ENCODE measurements at regions of chr9 and their contacts with region 1.

Region 1: DNA sequence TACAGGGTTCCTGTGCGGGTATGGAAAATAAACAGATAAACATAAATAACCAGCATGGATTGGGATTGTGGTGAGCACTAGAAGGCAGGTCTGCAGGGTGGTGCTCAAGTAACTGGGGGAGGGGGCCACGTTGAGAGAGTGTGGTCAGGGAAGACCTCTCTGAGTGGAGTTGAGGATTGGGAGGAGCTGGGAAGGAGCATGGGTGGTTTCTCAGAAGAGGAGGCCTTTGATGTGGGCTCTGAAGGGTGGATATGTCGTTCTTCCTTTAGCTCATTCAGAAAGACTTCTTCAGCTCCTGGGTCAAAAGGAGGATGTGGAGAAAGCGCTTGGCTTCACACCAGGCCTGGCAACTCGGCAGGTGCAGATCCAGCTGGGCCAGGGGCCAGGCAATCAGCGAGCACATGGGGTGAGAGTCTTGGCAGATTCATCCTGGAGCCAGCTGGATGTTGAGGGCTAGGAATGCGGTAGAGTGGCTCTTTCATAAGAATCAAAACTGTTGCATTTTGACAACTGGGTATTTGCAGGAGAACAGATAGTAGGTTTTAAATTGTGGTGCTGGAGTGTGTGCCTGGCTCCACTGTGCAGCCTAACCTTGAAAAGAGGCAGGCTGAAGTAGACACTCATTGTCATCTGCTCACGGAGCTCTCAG is 71.7 kb downstream of the PCSK5 start:
- DNase-seq: peak; percentile 64 to 88
- H3K4me3 ChIP-seq: no peak overlapping the region
- H3K27ac ChIP-seq: peak overlapping the region; percentile 81
- H3K4me1 ChIP-seq: peaks cover 42% of the 10 kb centered on the region
- H3K27me3 ChIP-seq: no peaks in the 10 kb centered on the region
- CTCF ChIP-seq: no peak

Region 2: GRCh38 chr9:75890472-75891276 is 71.5 kb before region 1 on chr9 and contains the start of gene PCSK5:
- CTCF ChIA-PET with region 1: interaction called, 3 read pairs
- POLR2A ChIA-PET with region 1: no interaction called
- intact Hi-C with region 1: loop called (anchors 1 kb)
- DNase-seq: peak; percentile 88 to 89
- H3K4me3 ChIP-seq: peak within 1 kb of the TSS; percentile 76
- H3K27ac ChIP-seq: peak within 1 kb of the TSS; percentile 92
- H3K4me1 ChIP-seq: peaks cover 32% of the 10 kb centered on the region
- H3K27me3 ChIP-seq: no peaks in the 10 kb centered on the region
- CTCF ChIP-seq: peak; percentile 35; the same call in 1 of the 2 replicates
- total RNA-seq, gene PCSK5: 8.2 and 9.8 TPM in 2 replicates

Region 3: GRCh38 chr9:75909776-75910175 is 52.4 kb before region 1 on chr9:
- CTCF ChIA-PET with region 1: no interaction called
- POLR2A ChIA-PET with region 1: no interaction called
- intact Hi-C with region 1: no loop called
- DNase-seq: no peak
- H3K4me3 ChIP-seq: no peak overlapping the region
- H3K27ac ChIP-seq: no peak overlapping the region
- H3K4me1 ChIP-seq: peaks cover 9% of the 10 kb centered on the region
- H3K27me3 ChIP-seq: no peaks in the 10 kb centered on the region
- CTCF ChIP-seq: no peak

Region 4: GRCh38 chr9:76067696-76068095 is 105.6 kb after region 1 on chr9:
- CTCF ChIA-PET with region 1: no interaction called
- POLR2A ChIA-PET with region 1: no interaction called
- intact Hi-C with region 1: no loop called
- DNase-seq: no peak
- H3K4me3 ChIP-seq: no peak overlapping the region
- H3K27ac ChIP-seq: no peak overlapping the region
- H3K4me1 ChIP-seq: no peaks in the 10 kb centered on the region
- H3K27me3 ChIP-seq: no peaks in the 10 kb centered on the region
- CTCF ChIP-seq: no peak

Region 5: GRCh38 chr9:76181020-76181641 is 219.0 kb after region 1 on chr9:
- CTCF ChIA-PET with region 1: no interaction called
- POLR2A ChIA-PET with region 1: interaction called, 3 read pairs
- intact Hi-C with region 1: loop called (anchors 1 kb)
- DNase-seq: peak; percentile 62 to 99
- H3K4me3 ChIP-seq: peak overlapping the region; percentile 37; the same call in 1 of the 2 replicates
- H3K27ac ChIP-seq: peak overlapping the region; percentile 76
- H3K4me1 ChIP-seq: peaks cover 22% of the 10 kb centered on the region
- H3K27me3 ChIP-seq: no peaks in the 10 kb centered on the region
- CTCF ChIP-seq: no peak

Region 6: DNA sequence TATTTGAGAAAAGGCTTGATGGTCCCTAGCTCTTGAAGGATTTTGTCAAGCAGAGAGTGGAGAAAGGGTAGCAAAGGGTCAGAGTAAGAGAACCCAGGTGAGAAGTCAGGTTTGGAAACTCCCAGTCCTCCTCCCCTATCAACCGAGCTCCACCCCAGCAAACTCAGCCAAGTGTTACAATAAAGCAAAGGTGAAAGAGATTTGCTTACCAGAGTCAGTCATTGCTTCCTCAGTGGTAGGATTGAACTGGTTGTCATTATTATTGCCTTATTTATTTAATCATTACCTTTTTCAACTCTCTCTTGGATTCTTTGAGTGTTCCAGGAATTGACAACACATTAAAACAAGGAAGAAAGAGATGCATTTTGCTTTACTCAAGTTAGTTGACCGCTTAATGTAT is 351.6 kb after region 1 on chr9:
- CTCF ChIA-PET with region 1: interaction called, 4 read pairs
- POLR2A ChIA-PET with region 1: no interaction called
- intact Hi-C with region 1: loop called (anchors 10 kb)
- DNase-seq: no peak
- H3K4me3 ChIP-seq: no peak overlapping the region
- H3K27ac ChIP-seq: no peak overlapping the region
- H3K4me1 ChIP-seq: peaks cover 47% of the 10 kb centered on the region
- H3K27me3 ChIP-seq: no peaks in the 10 kb centered on the region
- CTCF ChIP-seq: no peak

Region 7: DNA sequence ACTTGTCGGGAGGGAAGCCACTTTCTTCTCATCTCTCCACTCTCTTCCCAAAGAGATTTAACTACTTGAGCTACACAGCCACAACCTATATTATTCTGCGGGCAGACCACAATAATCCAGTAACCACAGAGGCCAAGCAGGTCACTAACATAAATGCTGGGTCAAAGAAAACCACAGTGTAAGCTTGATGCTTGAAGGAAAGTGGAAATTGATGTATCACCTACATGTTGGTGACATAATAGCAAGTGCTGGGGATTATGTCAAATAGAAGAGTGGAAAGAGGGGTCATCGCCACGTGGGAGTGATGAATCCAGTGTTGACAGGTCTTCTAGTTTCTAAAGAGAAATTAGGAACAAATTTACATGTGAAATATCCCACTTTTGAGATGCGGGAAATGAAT is 391.1 kb after region 1 on chr9:
- CTCF ChIA-PET with region 1: no interaction called
- POLR2A ChIA-PET with region 1: no interaction called
- intact Hi-C with region 1: no loop called
- DNase-seq: peak; percentile 29 to 59
- H3K4me3 ChIP-seq: no peak overlapping the region
- H3K27ac ChIP-seq: no peak overlapping the region
- H3K4me1 ChIP-seq: peaks cover 21% of the 10 kb centered on the region
- H3K27me3 ChIP-seq: no peaks in the 10 kb centered on the region
- CTCF ChIP-seq: no peak